ENCODE measurements at regions of chr13 and their contacts with region 1.

Region 1: GRCh38 chr13:32610538-32610937 is 24.3 kb downstream of the PDS5B start:
- DNase-seq: no peak
- ATAC-seq: no peak
- H3K4me3 ChIP-seq: no peak overlapping the region
- H3K4me3 Mint-ChIP-seq: no peak overlapping the region
- H3K27ac ChIP-seq: no peak overlapping the region
- H3K27ac Mint-ChIP-seq: no peak overlapping the region
- H3K4me1 ChIP-seq: no peaks in the 10 kb centered on the region
- H3K4me1 Mint-ChIP-seq: peaks cover 44% of the 10 kb centered on the region
- H3K27me3 ChIP-seq: no peaks in the 10 kb centered on the region
- H3K27me3 Mint-ChIP-seq: no peaks in the 10 kb centered on the region
- CTCF ChIP-seq: no peak

Region 2: DNA sequence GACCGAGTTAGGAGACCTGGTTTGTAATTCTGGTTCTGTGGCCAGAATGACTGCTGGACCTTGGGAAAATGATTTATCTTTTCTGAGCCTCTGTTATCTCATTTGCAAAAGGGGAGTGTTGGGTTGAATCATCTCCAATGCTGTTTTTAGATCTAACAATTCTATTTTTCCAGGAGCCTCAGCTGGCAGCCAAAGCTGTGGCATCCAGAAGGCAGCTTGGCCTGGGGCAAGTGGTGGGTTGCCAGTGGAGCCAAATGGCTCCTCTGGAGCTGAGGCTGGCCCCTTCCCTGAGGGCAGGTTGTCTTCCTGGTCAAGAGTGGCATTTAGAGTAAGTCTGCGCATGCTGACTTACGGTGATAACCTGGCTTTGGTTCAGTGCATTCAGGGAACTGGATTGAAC is 1389.5 kb before region 1 on chr13:
- CTCF ChIA-PET with region 1: no interaction called
- POLR2A ChIA-PET with region 1: no interaction called
- intact Hi-C with region 1: no loop called
- DNase-seq: no peak
- ATAC-seq: no peak
- H3K4me3 ChIP-seq: no peak overlapping the region
- H3K4me3 Mint-ChIP-seq: no peak overlapping the region
- H3K27ac ChIP-seq: no peak overlapping the region
- H3K27ac Mint-ChIP-seq: no peak overlapping the region
- H3K4me1 ChIP-seq: no peaks in the 10 kb centered on the region
- H3K4me1 Mint-ChIP-seq: no peaks in the 10 kb centered on the region
- H3K27me3 ChIP-seq: no peaks in the 10 kb centered on the region
- H3K27me3 Mint-ChIP-seq: no peaks in the 10 kb centered on the region
- CTCF ChIP-seq: no peak

Region 3: GRCh38 chr13:31767171-31767900 is 843.2 kb before region 1 on chr13:
- CTCF ChIA-PET with region 1: no interaction called
- POLR2A ChIA-PET with region 1: no interaction called
- intact Hi-C with region 1: no loop called
- DNase-seq: no peak
- ATAC-seq: no peak
- H3K4me3 ChIP-seq: no peak overlapping the region
- H3K4me3 Mint-ChIP-seq: no peak overlapping the region
- H3K27ac ChIP-seq: no peak overlapping the region
- H3K27ac Mint-ChIP-seq: no peak overlapping the region
- H3K4me1 ChIP-seq: no peaks in the 10 kb centered on the region
- H3K4me1 Mint-ChIP-seq: no peaks in the 10 kb centered on the region
- H3K27me3 ChIP-seq: no peaks in the 10 kb centered on the region
- H3K27me3 Mint-ChIP-seq: peaks cover 5% of the 10 kb centered on the region
- CTCF ChIP-seq: no peak

Region 4: DNA sequence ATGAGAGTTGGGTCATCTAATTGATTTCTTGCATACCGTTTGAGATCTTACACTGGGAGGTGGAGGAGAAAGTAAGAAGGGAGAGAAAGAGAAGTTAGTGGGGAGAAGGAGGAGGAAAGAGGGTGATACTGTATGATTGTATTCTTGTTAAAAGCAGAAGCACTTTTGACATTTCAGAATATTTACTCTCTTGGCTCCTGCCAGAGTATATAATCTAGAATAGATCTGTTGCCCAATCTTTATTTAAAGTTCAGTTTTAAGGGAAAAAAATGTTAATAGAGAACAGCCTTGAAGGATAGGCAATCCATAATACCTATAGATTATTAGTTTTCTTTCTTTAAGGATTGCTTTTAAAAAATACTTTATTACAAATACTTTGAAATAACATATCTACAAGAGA is 17.3 kb after region 1 on chr13:
- CTCF ChIA-PET with region 1: no interaction called
- POLR2A ChIA-PET with region 1: interaction called, 5 read pairs
- intact Hi-C with region 1: loop called in 1 of 2 experiments (anchors 2 kb)
- DNase-seq: no peak
- ATAC-seq: no peak
- H3K4me3 ChIP-seq: no peak overlapping the region
- H3K4me3 Mint-ChIP-seq: no peak overlapping the region
- H3K27ac ChIP-seq: no peak overlapping the region
- H3K27ac Mint-ChIP-seq: no peak overlapping the region
- H3K4me1 ChIP-seq: peaks cover 9% of the 10 kb centered on the region
- H3K4me1 Mint-ChIP-seq: peaks cover 53% of the 10 kb centered on the region
- H3K27me3 ChIP-seq: no peaks in the 10 kb centered on the region
- H3K27me3 Mint-ChIP-seq: no peaks in the 10 kb centered on the region
- CTCF ChIP-seq: no peak

Region 5: GRCh38 chr13:32791545-32792172 is 181.1 kb after region 1 on chr13:
- CTCF ChIA-PET with region 1: no interaction called
- POLR2A ChIA-PET with region 1: no interaction called
- intact Hi-C with region 1: no loop called
- DNase-seq: peak in 6 of 9 experiments; percentile 10 to 75 (median 33)
- ATAC-seq: peak; percentile 74
- H3K4me3 ChIP-seq: no peak overlapping the region
- H3K4me3 Mint-ChIP-seq: peak overlapping the region; percentile 46
- H3K27ac ChIP-seq: peak overlapping the region; percentile 31
- H3K27ac Mint-ChIP-seq: peak overlapping the region; percentile 78
- H3K4me1 ChIP-seq: peaks cover 45% of the 10 kb centered on the region
- H3K4me1 Mint-ChIP-seq: peaks cover 52% of the 10 kb centered on the region
- H3K27me3 ChIP-seq: no peaks in the 10 kb centered on the region
- H3K27me3 Mint-ChIP-seq: no peaks in the 10 kb centered on the region
- CTCF ChIP-seq: no peak

Region 6: GRCh38 chr13:32905063-32905863 is 294.7 kb after region 1 on chr13:
- CTCF ChIA-PET with region 1: no interaction called
- POLR2A ChIA-PET with region 1: no interaction called
- intact Hi-C with region 1: no loop called
- DNase-seq: peak in 1 of 9 experiments; percentile 11
- ATAC-seq: peak; percentile 29
- H3K4me3 ChIP-seq: no peak overlapping the region
- H3K4me3 Mint-ChIP-seq: no peak overlapping the region
- H3K27ac ChIP-seq: no peak overlapping the region
- H3K27ac Mint-ChIP-seq: no peak overlapping the region
- H3K4me1 ChIP-seq: no peaks in the 10 kb centered on the region
- H3K4me1 Mint-ChIP-seq: peaks cover 3% of the 10 kb centered on the region
- H3K27me3 ChIP-seq: no peaks in the 10 kb centered on the region
- H3K27me3 Mint-ChIP-seq: no peaks in the 10 kb centered on the region
- CTCF ChIP-seq: no peak